CD4-positive, alpha-beta memory T cell (primary cell): ENCODE measurements at regions of chr17 and their contacts with region 1.

Region 1: DNA sequence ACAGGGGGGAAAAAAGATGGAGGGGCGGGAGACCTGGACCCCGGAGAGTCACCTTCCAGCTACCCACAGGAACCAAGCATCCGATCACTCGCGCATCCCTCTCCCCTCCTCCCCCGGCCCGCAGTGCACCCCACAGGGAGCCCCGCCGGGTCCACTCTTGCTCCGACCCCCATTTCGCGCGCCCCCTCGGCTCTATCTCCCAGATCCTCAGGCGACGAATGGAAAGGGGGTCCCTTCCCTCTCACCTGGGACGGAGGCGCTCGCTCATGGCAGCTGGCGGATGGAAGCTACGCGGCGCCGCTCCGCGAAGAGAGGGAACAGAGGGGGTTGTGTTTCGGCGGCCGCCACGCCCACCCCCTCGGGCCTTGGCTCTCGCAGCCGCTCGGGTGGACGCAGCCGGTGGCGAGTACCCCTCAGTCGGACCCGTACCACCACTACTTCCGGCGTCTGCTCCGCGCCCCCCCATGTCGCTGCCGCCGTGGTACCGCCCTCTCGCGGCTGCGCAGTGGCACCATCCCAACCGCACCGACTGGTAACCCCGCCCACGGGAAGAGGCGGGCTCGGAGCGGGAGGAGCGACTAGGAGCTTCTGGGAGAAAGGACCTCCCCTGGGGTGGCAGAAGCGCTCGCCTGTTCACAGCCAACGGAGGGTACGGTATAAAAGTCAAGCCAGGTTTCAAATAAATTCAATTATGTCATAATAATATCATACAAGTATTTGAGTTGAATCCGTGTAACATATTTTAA is 29.7 kb downstream of the CPSF4L start:
- DNase-seq: peak; percentile 95 to 97 (median 96)
- H3K4me3 ChIP-seq: peak overlapping the region; percentile 63 to 77
- H3K4me3 Mint-ChIP-seq: peak overlapping the region; percentile 91 to 96 (median 94)
- H3K27ac ChIP-seq: peak overlapping the region; percentile 73
- H3K27ac Mint-ChIP-seq: peak overlapping the region; percentile 91 to 99 (median 97)
- H3K4me1 ChIP-seq: peaks cover 58% of the 10 kb centered on the region
- H3K4me1 Mint-ChIP-seq: peaks cover 44 to 81% (median 62%) of the 10 kb centered on the region in 4 donors
- H3K27me3 ChIP-seq: no peaks in the 10 kb centered on the region
- H3K27me3 Mint-ChIP-seq: no peaks in the 10 kb centered on the region

Region 2: GRCh38 chr17:73192894-73193701 is 38.9 kb before region 1 on chr17 and contains the start of gene COG1:
- CTCF ChIA-PET with region 1: interaction called, 15 read pairs
- POLR2A ChIA-PET with region 1: interaction called, 49 read pairs
- intact Hi-C with region 1: loop called (anchors 1 kb)
- DNase-seq: peak; percentile 68 to 91 (median 76)
- H3K4me3 ChIP-seq: peak within 1 kb of the TSS; percentile 71 to 84
- H3K4me3 Mint-ChIP-seq: peak within 1 kb of the TSS; percentile 97 to 99 (median 98)
- H3K27ac ChIP-seq: peak within 1 kb of the TSS; percentile 81
- H3K27ac Mint-ChIP-seq: peak within 1 kb of the TSS; percentile 79 to 99 (median 98)
- H3K4me1 ChIP-seq: peaks cover 22% of the 10 kb centered on the region
- H3K4me1 Mint-ChIP-seq: peaks cover 21 to 45% (median 28%) of the 10 kb centered on the region in 4 donors
- H3K27me3 ChIP-seq: no peaks in the 10 kb centered on the region
- H3K27me3 Mint-ChIP-seq: no peaks in the 10 kb centered on the region
- total RNA-seq, gene COG1: 76.2 to 81.6 TPM

Region 3: DNA sequence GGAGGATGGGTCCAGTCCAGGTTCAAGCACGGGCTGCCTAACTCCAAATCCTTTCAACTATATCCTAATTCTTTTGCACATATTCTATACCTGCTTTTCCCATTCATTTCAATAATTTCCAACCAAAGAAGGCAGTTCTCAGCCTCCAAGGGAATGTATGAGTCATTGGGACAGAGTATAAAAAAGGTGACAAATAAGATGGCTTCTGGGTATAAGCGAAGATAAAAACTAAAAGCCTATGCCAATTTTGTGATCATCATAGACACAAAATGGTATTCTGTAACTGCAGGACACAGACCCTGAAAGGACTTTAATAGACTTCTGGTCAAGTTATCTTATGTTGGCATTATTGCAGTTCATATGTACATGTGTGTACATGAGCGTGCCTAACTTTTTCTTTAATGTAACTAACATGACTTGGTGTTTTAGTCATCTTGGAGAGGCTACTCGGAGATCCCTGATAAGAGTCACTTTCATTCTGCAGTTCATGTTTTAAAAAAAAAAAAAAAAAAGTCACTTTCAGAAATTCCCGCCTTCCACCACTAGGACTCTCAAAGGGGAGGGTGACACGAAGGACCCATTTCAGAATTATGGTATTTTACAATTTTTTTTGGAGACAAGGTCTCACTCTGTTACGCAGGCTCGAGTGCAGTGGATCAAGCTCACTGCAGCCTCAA is 21.9 kb before region 1 on chr17:
- CTCF ChIA-PET with region 1: interaction called, 14 read pairs
- POLR2A ChIA-PET with region 1: interaction called, 18 read pairs
- intact Hi-C with region 1: no loop called
- DNase-seq: peak in 3 of 5 donors; percentile 20 to 35 (median 28)
- H3K4me3 ChIP-seq: no peak overlapping the region
- H3K4me3 Mint-ChIP-seq: peak overlapping the region in 1 of 8 donors; percentile 36
- H3K27ac ChIP-seq: peak overlapping the region; percentile 28
- H3K27ac Mint-ChIP-seq: peak overlapping the region; percentile 78 to 96 (median 88)
- H3K4me1 ChIP-seq: peaks cover 22% of the 10 kb centered on the region
- H3K4me1 Mint-ChIP-seq: peaks cover 16 to 43% (median 29%) of the 10 kb centered on the region in 4 donors
- H3K27me3 ChIP-seq: no peaks in the 10 kb centered on the region
- H3K27me3 Mint-ChIP-seq: no peaks in the 10 kb centered on the region

Region 4: GRCh38 chr17:73255671-73256181 is 23.7 kb after region 1 on chr17:
- CTCF ChIA-PET with region 1: interaction called, 13 read pairs
- POLR2A ChIA-PET with region 1: no interaction called
- intact Hi-C with region 1: no loop called
- DNase-seq: peak in 4 of 5 donors; percentile 32 to 49 (median 40)
- H3K4me3 ChIP-seq: no peak overlapping the region
- H3K4me3 Mint-ChIP-seq: no peak overlapping the region
- H3K27ac ChIP-seq: no peak overlapping the region
- H3K27ac Mint-ChIP-seq: peak overlapping the region in 2 of 7 donors; percentile 36 to 58
- H3K4me1 ChIP-seq: no peaks in the 10 kb centered on the region
- H3K4me1 Mint-ChIP-seq: peaks cover 0 to 5% (median 2%) of the 10 kb centered on the region in 4 donors
- H3K27me3 ChIP-seq: no peaks in the 10 kb centered on the region
- H3K27me3 Mint-ChIP-seq: peaks cover 0 to 2% of the 10 kb centered on the region in 2 donors